Right lobe of liver (tissue), 6 donors: ENCODE measurements at regions of chr19 and their contacts with region 1.

Region 1: GRCh38 chr19:35013031-35013819 is 13.1 kb downstream of the GRAMD1A start:
- DNase-seq: peak; percentile 80 to 83 (median 81)
- ATAC-seq: peak; percentile 81 to 90 (median 88)
- H3K4me3 ChIP-seq: no peak overlapping the region
- H3K27ac ChIP-seq: peak overlapping the region in 1 of 3 donors; percentile 37
- H3K4me1 ChIP-seq: peaks cover 0 to 8% (median 3%) of the 10 kb centered on the region in 4 donors
- H3K27me3 ChIP-seq: no peaks in the 10 kb centered on the region
- CTCF ChIP-seq: peak; percentile 96 to 99 (median 98)
- POLR2A ChIP-seq: no peak

Region 2: GRCh38 chr19:34974646-34975045 is 38.6 kb before region 1 on chr19:
- intact Hi-C with region 1: loop called (anchors 5 kb)
- DNase-seq: no peak
- ATAC-seq: no peak
- H3K4me3 ChIP-seq: no peak overlapping the region
- H3K27ac ChIP-seq: no peak overlapping the region
- H3K4me1 ChIP-seq: peaks cover 0 to 10% (median 2%) of the 10 kb centered on the region in 4 donors
- H3K27me3 ChIP-seq: no peaks in the 10 kb centered on the region
- CTCF ChIP-seq: no peak
- POLR2A ChIP-seq: no peak